Activated B cell treated with CpG ODN at 0.5 μM for 24 hours (primary cell): ENCODE measurements at regions of chr4 and their contacts with region 1.

Region 1: GRCh38 chr4:140153718-140154571 is at the start of gene MAML3:
- DNase-seq: peak; percentile 67
- ATAC-seq: peak; percentile 30
- H3K4me3 Mint-ChIP-seq: peak within 1 kb of the TSS; percentile 88
- H3K27ac Mint-ChIP-seq: peak within 1 kb of the TSS; percentile 81
- H3K4me1 Mint-ChIP-seq: peaks cover 52% of the 10 kb centered on the region
- H3K27me3 Mint-ChIP-seq: peaks cover 29% of the 10 kb centered on the region
- CTCF ChIP-seq: no peak
- total RNA-seq, gene MAML3: 1.9 and 2.6 TPM in 2 replicates

Region 2: DNA sequence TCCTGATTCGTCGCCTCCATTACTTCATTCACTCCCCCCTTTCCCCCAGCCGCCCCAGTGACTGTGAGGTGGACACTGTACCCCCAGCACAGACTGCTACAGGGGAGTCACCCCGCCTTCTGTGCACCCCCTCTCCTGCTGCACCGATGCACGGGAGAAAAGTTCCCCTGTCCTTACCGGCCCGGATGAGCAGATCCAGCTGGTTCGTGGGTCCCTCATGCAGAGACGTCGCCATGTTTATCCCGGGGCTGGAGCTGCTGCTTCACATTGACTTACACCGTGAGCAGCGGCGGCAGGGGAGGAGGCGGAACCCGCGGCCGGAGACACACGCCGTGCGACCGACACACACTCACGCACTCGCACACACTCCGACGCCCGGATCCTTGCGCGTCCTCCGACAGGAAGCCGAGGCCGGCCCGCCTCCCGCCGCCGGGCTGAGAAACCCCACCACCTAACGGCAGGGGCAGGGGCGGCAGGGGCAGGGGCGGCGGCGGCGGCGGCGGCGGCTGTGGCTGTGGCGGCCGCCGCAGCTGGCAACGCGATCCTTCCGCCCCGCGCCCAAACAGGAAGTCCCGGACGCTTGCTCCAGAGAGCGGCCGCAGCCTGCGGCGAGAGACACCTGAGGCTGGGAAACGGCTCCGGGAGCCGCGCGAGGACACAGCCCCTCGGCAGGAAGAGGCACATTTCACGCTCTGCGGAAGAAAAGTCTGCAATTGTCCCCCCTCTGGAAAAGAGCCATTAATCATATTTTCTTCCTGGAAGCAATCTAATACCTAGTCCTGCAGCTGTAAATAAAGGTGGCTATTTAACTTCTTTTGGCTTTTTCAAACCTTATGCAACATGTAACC is 1069.8 kb before region 1 on chr4:
- CTCF ChIA-PET with region 1: no interaction called
- POLR2A ChIA-PET with region 1: no interaction called
- intact Hi-C with region 1: loop called (anchors 5 kb)
- DNase-seq: peak; percentile 79
- ATAC-seq: peak; percentile 66
- H3K4me3 Mint-ChIP-seq: peak overlapping the region; percentile 99
- H3K27ac Mint-ChIP-seq: peak overlapping the region; percentile 99
- H3K4me1 Mint-ChIP-seq: peaks cover 38% of the 10 kb centered on the region
- H3K27me3 Mint-ChIP-seq: no peaks in the 10 kb centered on the region
- CTCF ChIP-seq: no peak

Region 3: GRCh38 chr4:139554893-139555704 is 598.8 kb before region 1 on chr4:
- CTCF ChIA-PET with region 1: no interaction called
- POLR2A ChIA-PET with region 1: no interaction called
- intact Hi-C with region 1: loop called (anchors 5 kb)
- DNase-seq: peak; percentile 71
- ATAC-seq: peak; percentile 60
- H3K4me3 Mint-ChIP-seq: peak overlapping the region; percentile 95
- H3K27ac Mint-ChIP-seq: peak overlapping the region; percentile 94
- H3K4me1 Mint-ChIP-seq: peaks cover 59% of the 10 kb centered on the region
- H3K27me3 Mint-ChIP-seq: no peaks in the 10 kb centered on the region
- CTCF ChIP-seq: no peak

Region 4: DNA sequence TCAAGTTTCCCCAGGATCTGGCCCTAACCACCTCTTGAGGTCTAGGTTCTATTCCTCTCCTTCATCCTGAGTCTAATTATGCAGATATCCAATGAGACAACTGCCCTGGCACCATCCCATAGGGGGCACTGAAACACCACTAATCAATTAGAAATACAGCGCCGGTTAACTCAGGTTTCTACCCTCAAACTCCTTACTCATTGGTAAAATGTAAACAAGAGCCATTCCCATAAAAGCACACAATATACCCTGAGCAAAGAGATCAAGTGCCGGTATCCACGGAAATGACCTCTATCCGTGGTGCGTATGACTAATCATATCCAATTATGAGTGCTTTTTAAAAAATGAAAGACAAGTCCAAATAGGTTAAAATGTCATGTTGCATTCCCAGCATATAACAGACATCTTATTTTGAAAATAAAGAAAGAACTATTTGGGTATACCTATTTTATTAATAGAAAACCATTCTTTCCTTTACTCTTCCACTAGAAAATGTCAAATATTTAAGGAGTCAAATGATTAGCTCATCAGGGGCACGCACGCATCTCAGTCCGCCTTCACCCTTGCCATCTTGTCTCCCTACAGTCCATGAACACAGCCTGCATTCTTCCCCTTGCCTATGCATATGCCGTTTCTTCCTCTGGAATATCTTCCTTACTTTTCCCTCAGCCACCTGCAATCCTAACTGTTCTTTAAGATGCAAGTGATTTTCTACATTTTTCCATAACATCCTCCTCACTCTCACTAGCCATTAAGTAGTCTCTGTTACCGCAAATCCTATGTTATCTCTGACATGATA is 141.1 kb before region 1 on chr4:
- CTCF ChIA-PET with region 1: no interaction called
- POLR2A ChIA-PET with region 1: no interaction called
- intact Hi-C with region 1: loop called (anchors 1 kb)
- DNase-seq: no peak
- ATAC-seq: peak; percentile 81
- H3K4me3 Mint-ChIP-seq: no peak overlapping the region
- H3K27ac Mint-ChIP-seq: no peak overlapping the region
- H3K4me1 Mint-ChIP-seq: no peaks in the 10 kb centered on the region
- H3K27me3 Mint-ChIP-seq: peaks cover 10% of the 10 kb centered on the region
- CTCF ChIP-seq: no peak

Region 5: GRCh38 chr4:140095694-140096482 is 58.1 kb before region 1 on chr4:
- CTCF ChIA-PET with region 1: interaction called, 3 read pairs
- POLR2A ChIA-PET with region 1: interaction called, 14 read pairs
- intact Hi-C with region 1: loop called (anchors 1 kb)
- DNase-seq: no peak
- ATAC-seq: peak; percentile 56
- H3K4me3 Mint-ChIP-seq: peak overlapping the region; percentile 56
- H3K27ac Mint-ChIP-seq: peak overlapping the region; percentile 76
- H3K4me1 Mint-ChIP-seq: peaks cover 77% of the 10 kb centered on the region
- H3K27me3 Mint-ChIP-seq: peaks cover 11% of the 10 kb centered on the region
- CTCF ChIP-seq: no peak

Region 6: GRCh38 chr4:140252742-140253555 is 99.0 kb after region 1 on chr4:
- CTCF ChIA-PET with region 1: interaction called, 9 read pairs
- POLR2A ChIA-PET with region 1: interaction called, 5 read pairs
- intact Hi-C with region 1: loop called (anchors 1 kb)
- DNase-seq: peak; percentile 67
- ATAC-seq: peak; percentile 83
- H3K4me3 Mint-ChIP-seq: peak overlapping the region; percentile 72
- H3K27ac Mint-ChIP-seq: no peak overlapping the region
- H3K4me1 Mint-ChIP-seq: peaks cover 8% of the 10 kb centered on the region
- H3K27me3 Mint-ChIP-seq: peaks cover 25% of the 10 kb centered on the region
- CTCF ChIP-seq: peak; percentile 82

Region 7: GRCh38 chr4:140556372-140557085 is 402.6 kb after region 1 on chr4:
- CTCF ChIA-PET with region 1: no interaction called
- POLR2A ChIA-PET with region 1: no interaction called
- intact Hi-C with region 1: loop called (anchors 5 kb)
- DNase-seq: no peak
- ATAC-seq: peak; percentile 96
- H3K4me3 Mint-ChIP-seq: peak overlapping the region; percentile 44
- H3K27ac Mint-ChIP-seq: no peak overlapping the region
- H3K4me1 Mint-ChIP-seq: peaks cover 18% of the 10 kb centered on the region
- H3K27me3 Mint-ChIP-seq: peaks cover 21% of the 10 kb centered on the region
- CTCF ChIP-seq: no peak

Region 8: DNA sequence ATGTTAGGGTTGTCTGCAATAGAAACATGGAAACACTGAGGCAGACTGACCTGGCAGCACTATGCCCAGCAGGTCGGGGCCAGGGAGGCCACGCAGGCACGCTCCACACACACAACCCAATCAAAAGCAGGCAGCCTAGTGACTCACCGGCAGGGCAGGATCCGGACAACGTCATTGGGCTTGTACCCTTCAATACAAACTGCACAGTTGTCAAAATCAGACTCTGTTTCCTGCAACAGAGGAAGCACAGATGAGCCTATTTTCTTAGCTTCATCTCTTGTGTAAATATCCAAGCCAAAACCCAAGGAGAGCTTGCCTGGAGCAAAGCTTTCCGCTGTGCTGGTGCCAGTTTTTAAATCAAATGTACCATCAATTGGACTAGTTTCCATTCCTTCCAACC is 793.6 kb after region 1 on chr4:
- CTCF ChIA-PET with region 1: no interaction called
- POLR2A ChIA-PET with region 1: no interaction called
- intact Hi-C with region 1: no loop called
- DNase-seq: no peak
- ATAC-seq: no peak
- H3K4me3 Mint-ChIP-seq: no peak overlapping the region
- H3K27ac Mint-ChIP-seq: no peak overlapping the region
- H3K4me1 Mint-ChIP-seq: no peaks in the 10 kb centered on the region
- H3K27me3 Mint-ChIP-seq: peaks cover 12% of the 10 kb centered on the region
- CTCF ChIP-seq: no peak

Region 9: DNA sequence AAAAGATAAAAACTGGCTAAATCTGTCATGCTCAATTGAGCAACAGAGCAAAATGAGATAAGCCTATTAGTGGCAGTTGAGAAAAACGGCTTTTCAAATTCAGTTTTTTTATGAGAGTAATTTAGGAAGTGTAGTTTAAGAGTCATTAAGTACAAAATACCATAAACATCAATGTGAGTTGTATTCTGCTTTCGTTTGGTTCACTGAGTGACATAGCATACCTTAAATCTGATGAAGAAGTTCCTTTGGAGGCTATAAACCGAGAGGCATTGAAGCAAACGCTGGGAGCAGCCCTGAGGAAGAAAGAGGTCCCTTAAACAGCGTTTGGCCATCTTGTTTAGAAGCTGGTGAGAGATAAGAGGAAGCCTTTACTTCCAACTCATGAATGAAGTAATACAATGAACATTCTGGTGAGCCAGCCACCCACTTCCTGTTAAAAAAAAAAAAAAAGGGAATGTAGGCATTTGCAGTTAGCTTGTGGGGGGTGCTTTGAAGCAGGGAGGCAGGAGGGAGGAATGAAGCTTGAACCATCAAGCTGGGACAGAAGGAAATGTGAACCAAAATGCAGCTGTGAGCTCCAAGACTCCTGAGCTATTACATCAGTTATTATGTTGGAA is 1199.1 kb after region 1 on chr4:
- CTCF ChIA-PET with region 1: no interaction called
- POLR2A ChIA-PET with region 1: no interaction called
- intact Hi-C with region 1: no loop called
- DNase-seq: no peak
- ATAC-seq: no peak
- H3K4me3 Mint-ChIP-seq: no peak overlapping the region
- H3K27ac Mint-ChIP-seq: no peak overlapping the region
- H3K4me1 Mint-ChIP-seq: peaks cover 5% of the 10 kb centered on the region
- H3K27me3 Mint-ChIP-seq: no peaks in the 10 kb centered on the region
- CTCF ChIP-seq: no peak